ENCODE measurements at regions of chr18 and their contacts with region 1.

Region 1: GRCh38 chr18:35290073-35290735 is at the start of gene ZSCAN30:
- DNase-seq: peak; percentile 85 to 98
- H3K4me3 ChIP-seq: peak within 1 kb of the TSS; percentile 83 to 97 (median 90)
- H3K27ac ChIP-seq: peak within 1 kb of the TSS; percentile 78
- H3K4me1 ChIP-seq: peaks cover 0 to 10% (median 0%) of the 10 kb centered on the region in 4 experiments; a peak in 2 of 7 replicates
- H3K27me3 ChIP-seq: no peaks in the 10 kb centered on the region
- CTCF ChIP-seq: no peak
- EP300 ChIP-seq: peak; percentile 46 to 56; a peak in 2 of 3 replicates
- POLR2A ChIP-seq: peak; percentile 86 to 94
- RAD21 ChIP-seq: peak in 1 of 2 experiments; percentile 7; a peak in 1 of 4 replicates
- total RNA-seq, gene ZSCAN30: 9.9 and 10.3 TPM in 2 replicates

Region 2: GRCh38 chr18:35240664-35241447 is 49.3 kb before region 1 on chr18 and contains the start of gene ZNF397:
- CTCF ChIA-PET with region 1: interaction called, 3 read pairs
- POLR2A ChIA-PET with region 1: interaction called, 28 read pairs
- DNase-seq: peak; percentile 90 to 94
- H3K4me3 ChIP-seq: peak within 1 kb of the TSS; percentile 61 to 78 (median 74)
- H3K27ac ChIP-seq: peak within 1 kb of the TSS; percentile 91
- H3K4me1 ChIP-seq: peaks cover 0 to 3% (median 0%) of the 10 kb centered on the region in 4 experiments; a peak in 2 of 7 replicates
- H3K27me3 ChIP-seq: no peaks in the 10 kb centered on the region
- CTCF ChIP-seq: no peak
- EP300 ChIP-seq: no peak
- POLR2A ChIP-seq: peak; percentile 95
- RAD21 ChIP-seq: no peak
- total RNA-seq, gene ZNF397: 38.9 and 39.5 TPM in 2 replicates

Region 3: GRCh38 chr18:35247444-35248249 is 42.6 kb before region 1 on chr18:
- CTCF ChIA-PET with region 1: interaction called, 3 read pairs
- POLR2A ChIA-PET with region 1: interaction called, 10 read pairs
- DNase-seq: no peak
- H3K4me3 ChIP-seq: no peak overlapping the region
- H3K27ac ChIP-seq: no peak overlapping the region
- H3K4me1 ChIP-seq: peaks cover 0 to 1% (median 0%) of the 10 kb centered on the region in 4 experiments; a peak in 1 of 7 replicates
- H3K27me3 ChIP-seq: no peaks in the 10 kb centered on the region
- CTCF ChIP-seq: no peak
- EP300 ChIP-seq: no peak
- POLR2A ChIP-seq: no peak
- RAD21 ChIP-seq: no peak

Region 4: DNA sequence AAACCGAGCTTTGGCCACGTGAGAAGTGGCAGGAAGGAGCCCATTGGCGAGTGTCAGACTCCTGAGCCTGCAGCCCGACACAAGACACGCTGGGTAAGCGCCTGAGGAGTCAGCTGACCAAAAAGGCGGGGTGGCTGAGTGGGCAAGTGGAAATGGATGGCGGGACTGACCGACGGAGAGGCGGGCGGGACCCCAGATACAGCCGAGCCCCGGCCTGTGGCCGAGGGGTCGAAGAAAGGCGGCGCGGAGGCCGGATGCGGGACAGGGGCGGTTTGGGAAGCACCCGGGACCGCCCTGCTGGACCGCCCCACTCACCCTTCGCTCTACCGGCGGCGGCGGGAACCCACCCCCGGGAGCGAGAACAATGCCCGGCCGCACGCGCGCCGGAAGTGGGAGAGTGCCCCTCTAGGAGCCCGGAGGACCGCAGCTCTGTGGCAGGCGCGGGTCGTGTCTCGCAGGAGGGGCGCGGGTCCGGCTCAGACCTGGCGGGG is 23.0 kb before region 1 on chr18:
- CTCF ChIA-PET with region 1: interaction called, 11 read pairs
- POLR2A ChIA-PET with region 1: interaction called, 53 read pairs
- DNase-seq: no peak
- H3K4me3 ChIP-seq: peak overlapping the region in 3 of 4 experiments; percentile 17 to 36 (median 36); a peak in 4 of 8 replicates
- H3K27ac ChIP-seq: no peak overlapping the region
- H3K4me1 ChIP-seq: no peaks in the 10 kb centered on the region; a peak in 1 of 7 replicates
- H3K27me3 ChIP-seq: no peaks in the 10 kb centered on the region
- CTCF ChIP-seq: no peak
- EP300 ChIP-seq: no peak
- POLR2A ChIP-seq: no peak
- RAD21 ChIP-seq: no peak

Region 5: GRCh38 chr18:35303610-35304009 is 13.4 kb after region 1 on chr18:
- CTCF ChIA-PET with region 1: no interaction called
- POLR2A ChIA-PET with region 1: interaction called, 12 read pairs
- DNase-seq: no peak
- H3K4me3 ChIP-seq: no peak overlapping the region
- H3K27ac ChIP-seq: no peak overlapping the region
- H3K4me1 ChIP-seq: no peaks in the 10 kb centered on the region
- H3K27me3 ChIP-seq: peaks cover 0 to 3% (median 0%) of the 10 kb centered on the region in 4 experiments; a peak in 1 of 7 replicates
- CTCF ChIP-seq: no peak
- EP300 ChIP-seq: no peak
- POLR2A ChIP-seq: no peak
- RAD21 ChIP-seq: no peak

Region 6: DNA sequence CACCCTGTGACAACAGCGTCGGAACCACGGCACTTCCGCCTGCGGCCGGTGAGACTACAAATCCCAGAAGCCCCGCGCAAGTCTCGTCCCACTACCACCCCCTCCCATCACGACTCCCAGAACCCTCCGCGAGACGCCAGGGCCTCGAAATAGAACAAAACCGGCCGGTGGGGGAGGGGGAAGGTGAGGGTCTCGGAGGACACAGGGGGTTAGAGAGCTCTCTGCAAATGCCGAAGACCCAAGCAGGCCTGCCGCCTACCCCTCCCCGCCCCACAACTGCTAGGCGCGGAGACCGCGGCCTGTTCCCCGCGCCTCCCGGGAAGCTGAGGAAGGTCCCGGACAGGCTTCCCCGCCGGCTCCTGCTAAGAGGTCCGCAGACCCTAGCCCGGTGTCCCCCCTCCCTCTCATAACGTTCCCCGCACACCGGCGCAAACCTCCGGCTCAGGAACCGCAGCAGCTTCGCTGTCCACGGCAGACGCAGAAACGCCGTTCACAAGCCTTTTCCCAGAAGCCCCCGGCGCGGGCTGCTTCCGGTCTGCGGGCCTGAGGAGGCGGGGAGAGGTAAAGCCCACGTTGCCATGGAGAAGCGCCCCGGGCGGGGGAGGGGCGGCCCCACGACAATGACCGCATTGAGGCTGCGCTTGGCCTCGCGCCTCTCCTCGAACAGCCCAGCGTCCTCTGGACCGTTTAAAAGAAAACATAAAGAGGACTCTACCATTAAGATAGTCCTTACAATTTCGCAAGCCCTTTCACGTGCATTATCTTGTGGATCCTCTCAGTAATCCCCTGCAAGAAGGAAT is 53.9 kb after region 1 on chr18 and contains the start of gene ZNF24:
- CTCF ChIA-PET with region 1: no interaction called
- POLR2A ChIA-PET with region 1: interaction called, 20 read pairs
- DNase-seq: peak; percentile 68 to 94
- H3K4me3 ChIP-seq: peak within 1 kb of the TSS; percentile 91 to 97 (median 92)
- H3K27ac ChIP-seq: peak within 1 kb of the TSS; percentile 98
- H3K4me1 ChIP-seq: peaks cover 0 to 5% (median 1%) of the 10 kb centered on the region in 4 experiments; a peak in 3 of 7 replicates
- H3K27me3 ChIP-seq: no peaks in the 10 kb centered on the region
- CTCF ChIP-seq: no peak
- EP300 ChIP-seq: no peak; a peak in 1 of 3 replicates
- POLR2A ChIP-seq: peak; percentile 87 to 92
- RAD21 ChIP-seq: 0 out of 4 replicates have a peak, but pooled peaks of 1 of the 2 experiments have one; percentile 1
- total RNA-seq, gene ZNF24: 56.9 and 60.1 TPM in 2 replicates